ENCODE measurements at regions of chr16 and their contacts with region 1.

Region 1: GRCh38 chr16:78375055-78375679 is 275.7 kb downstream of the WWOX start:
- DNase-seq: no peak
- H3K4me3 ChIP-seq: no peak overlapping the region
- H3K27ac ChIP-seq: no peak overlapping the region
- H3K4me1 ChIP-seq: no peaks in the 10 kb centered on the region
- H3K27me3 ChIP-seq: no peaks in the 10 kb centered on the region
- CTCF ChIP-seq: no peak

Region 2: DNA sequence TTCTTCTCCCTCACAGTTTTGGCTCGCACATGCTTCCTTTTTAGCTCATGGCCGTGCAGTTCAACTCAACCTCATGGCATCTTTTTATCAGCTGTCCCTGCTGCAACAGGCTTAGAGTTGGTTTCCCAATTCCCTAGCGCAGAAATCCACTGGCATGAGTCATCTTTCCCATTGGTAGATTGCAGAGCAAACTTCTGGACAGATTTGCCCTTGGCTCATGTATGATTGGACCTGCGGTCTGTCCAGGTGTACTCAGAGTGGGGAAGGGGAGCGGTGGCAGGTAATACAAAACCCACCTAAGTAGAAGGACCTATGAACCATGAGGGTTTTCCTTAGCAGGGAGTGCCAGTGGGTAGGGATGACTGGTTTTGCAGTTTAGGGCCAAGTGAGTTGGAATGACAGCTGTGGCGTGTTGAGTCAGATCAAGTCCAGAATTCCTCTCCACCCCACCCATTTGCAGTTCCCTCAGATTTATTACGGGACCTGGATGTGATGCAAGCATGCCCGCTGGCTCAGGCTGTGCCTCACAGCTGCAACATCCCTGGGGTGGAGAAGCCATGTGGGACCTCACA is 309.0 kb after region 1 on chr16:
- CTCF ChIA-PET with region 1: no interaction called
- POLR2A ChIA-PET with region 1: no interaction called
- intact Hi-C with region 1: no loop called
- DNase-seq: peak; percentile 2
- H3K4me3 ChIP-seq: no peak overlapping the region
- H3K27ac ChIP-seq: no peak overlapping the region
- H3K4me1 ChIP-seq: no peaks in the 10 kb centered on the region
- H3K27me3 ChIP-seq: no peaks in the 10 kb centered on the region
- CTCF ChIP-seq: no peak

Region 3: GRCh38 chr16:79845033-79845733 is 1470.0 kb after region 1 on chr16:
- CTCF ChIA-PET with region 1: interaction called, 12 read pairs
- POLR2A ChIA-PET with region 1: no interaction called
- intact Hi-C with region 1: no loop called
- DNase-seq: no peak
- H3K4me3 ChIP-seq: no peak overlapping the region
- H3K27ac ChIP-seq: no peak overlapping the region
- H3K4me1 ChIP-seq: no peaks in the 10 kb centered on the region
- H3K27me3 ChIP-seq: peaks cover 7% of the 10 kb centered on the region
- CTCF ChIP-seq: no peak

Measured in A673 (cell line).